ENCODE measurements at regions of chr5 and their contacts with region 1.

Region 1: DNA sequence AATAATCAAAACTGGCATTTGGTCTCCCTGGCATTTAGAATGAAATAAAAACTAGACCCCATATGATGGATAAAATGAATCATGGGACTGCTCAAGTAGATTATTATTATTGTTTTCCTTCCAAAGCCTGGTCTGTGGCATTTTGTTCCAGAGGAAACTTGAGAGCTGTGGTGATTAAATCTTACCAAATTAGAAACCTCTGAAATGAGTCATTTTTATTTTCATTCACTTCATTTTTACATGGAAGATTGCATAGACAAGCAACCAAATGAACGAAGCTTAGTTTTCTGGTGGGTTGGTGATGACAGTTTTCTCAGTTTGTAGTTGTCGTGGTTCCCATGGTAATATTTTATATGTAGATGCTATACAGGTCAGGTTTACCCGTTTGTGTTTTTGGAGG is 23.4 kb downstream of the PAM start:
- DNase-seq: no peak
- H3K4me3 ChIP-seq: no peak overlapping the region
- H3K27ac ChIP-seq: peak overlapping the region; percentile 63 to 69
- H3K4me1 ChIP-seq: peaks cover 11 to 47% of the 10 kb centered on the region in 2 donors
- H3K27me3 ChIP-seq: no peaks in the 10 kb centered on the region
- CTCF ChIP-seq: no peak

Region 2: GRCh38 chr5:102666164-102666946 is 112.1 kb before region 1 on chr5:
- intact Hi-C with region 1: no loop called
- DNase-seq: no peak
- H3K4me3 ChIP-seq: no peak overlapping the region
- H3K27ac ChIP-seq: no peak overlapping the region
- H3K4me1 ChIP-seq: no peaks in the 10 kb centered on the region
- H3K27me3 ChIP-seq: no peaks in the 10 kb centered on the region
- CTCF ChIP-seq: no peak

Region 3: DNA sequence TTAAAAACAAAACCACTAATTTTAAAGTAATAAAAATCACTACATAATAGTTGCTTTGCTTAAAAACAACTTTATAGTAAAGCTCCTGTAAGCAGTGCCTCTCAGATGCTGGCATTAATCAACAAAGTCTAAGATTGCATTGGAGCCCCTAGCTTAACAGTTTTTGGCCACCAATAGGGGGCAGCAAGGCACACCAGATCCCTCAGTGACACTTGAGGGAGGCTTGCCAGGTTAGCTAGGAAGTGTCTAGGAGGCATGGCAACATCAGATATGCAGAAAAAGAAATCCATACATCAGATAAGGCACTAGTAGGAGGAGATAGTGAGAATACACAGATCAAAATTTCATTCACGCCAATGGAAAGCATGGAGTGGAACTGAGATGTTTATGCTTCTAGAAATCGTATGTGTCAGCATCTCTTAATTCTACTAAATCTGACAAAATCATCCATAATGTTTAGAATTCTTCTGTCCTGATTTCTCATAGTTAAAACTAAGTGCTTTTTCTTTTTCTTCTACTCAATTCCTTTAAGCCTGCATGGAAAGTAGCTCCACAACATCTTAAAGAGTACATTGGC is 97.0 kb before region 1 on chr5:
- intact Hi-C with region 1: loop called (anchors 2 kb)
- DNase-seq: peak in 1 of 2 donors; percentile 79
- H3K4me3 ChIP-seq: no peak overlapping the region
- H3K27ac ChIP-seq: no peak overlapping the region
- H3K4me1 ChIP-seq: peaks cover 0 to 2% of the 10 kb centered on the region in 2 donors
- H3K27me3 ChIP-seq: no peaks in the 10 kb centered on the region
- CTCF ChIP-seq: peak; percentile 57 to 75 (median 68)

Region 4: DNA sequence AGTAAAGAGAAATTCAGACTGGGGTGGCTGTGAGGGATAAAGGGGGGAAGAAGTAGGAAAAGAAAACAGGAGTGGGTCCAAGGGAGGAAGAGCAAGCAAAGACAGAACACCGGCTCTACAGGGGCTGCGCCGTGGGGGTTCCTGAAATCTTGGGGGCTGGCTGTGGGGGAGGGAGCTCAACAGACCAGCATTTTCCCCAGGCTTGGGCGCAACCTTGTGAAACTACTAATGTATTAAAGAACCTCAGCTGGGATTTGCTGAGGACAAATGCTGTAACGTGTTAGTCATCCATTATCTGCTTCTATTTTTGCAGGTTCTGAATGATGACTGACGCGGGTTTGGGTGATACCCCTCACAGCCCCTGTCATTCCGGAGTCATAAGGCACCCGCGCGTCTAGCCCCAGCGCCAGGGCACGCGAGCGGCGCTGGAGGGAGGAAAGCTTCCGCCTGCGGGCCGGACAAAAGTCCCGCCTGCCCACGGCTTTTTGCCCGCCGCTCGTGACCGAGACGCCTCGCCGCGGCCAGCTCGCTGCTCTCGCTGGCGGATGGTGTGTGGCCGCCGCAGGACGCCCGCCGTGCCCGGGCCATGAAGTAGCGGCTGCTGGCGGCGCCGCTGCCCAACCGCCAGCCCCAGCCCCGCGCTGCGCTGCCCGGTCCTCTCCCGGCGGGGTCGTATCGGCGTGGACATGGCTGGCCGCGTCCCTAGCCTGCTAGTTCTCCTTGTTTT is 87.2 kb after region 1 on chr5:
- intact Hi-C with region 1: loop called (anchors 5 kb)
- DNase-seq: peak; percentile 34 to 85
- H3K4me3 ChIP-seq: peak overlapping the region; percentile 71 to 73
- H3K27ac ChIP-seq: peak overlapping the region; percentile 92 to 96
- H3K4me1 ChIP-seq: peaks cover 0 to 37% of the 10 kb centered on the region in 2 donors
- H3K27me3 ChIP-seq: no peaks in the 10 kb centered on the region
- CTCF ChIP-seq: no peak

Region 5: GRCh38 chr5:102959055-102959454 is 180.6 kb after region 1 on chr5:
- intact Hi-C with region 1: loop called (anchors 2 kb)
- DNase-seq: no peak
- H3K4me3 ChIP-seq: no peak overlapping the region
- H3K27ac ChIP-seq: peak overlapping the region; percentile 64 to 76
- H3K4me1 ChIP-seq: peaks cover 0 to 29% of the 10 kb centered on the region in 2 donors
- H3K27me3 ChIP-seq: no peaks in the 10 kb centered on the region
- CTCF ChIP-seq: no peak

Region 6: DNA sequence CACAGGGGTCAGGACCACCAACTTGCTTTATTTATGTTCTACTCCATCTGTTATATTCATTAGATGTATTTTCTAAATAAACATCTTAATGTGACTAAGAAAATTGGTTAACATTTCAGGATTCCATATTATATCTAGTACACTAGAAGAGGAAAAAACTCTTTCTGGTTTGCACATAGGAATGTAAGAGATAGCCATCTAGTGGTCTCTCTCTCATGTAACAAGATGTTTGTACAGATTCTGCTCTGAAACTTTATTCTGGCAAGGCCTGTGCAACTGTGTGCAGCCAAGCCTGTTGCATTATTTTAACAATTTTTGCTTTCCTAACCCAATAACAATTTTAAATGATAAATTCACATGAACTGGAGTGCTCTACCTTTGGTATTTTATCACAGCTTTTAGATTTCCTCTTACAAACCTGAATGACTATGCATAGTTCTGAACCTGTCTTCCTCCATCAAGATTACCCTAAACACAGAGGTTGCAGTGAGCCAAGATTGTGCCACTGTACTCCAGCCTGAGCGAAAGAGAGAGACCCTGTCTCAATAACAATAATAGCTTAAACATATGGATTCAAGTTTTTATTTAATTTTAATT is 193.3 kb after region 1 on chr5:
- intact Hi-C with region 1: loop called (anchors 5 kb)
- DNase-seq: no peak
- H3K4me3 ChIP-seq: no peak overlapping the region
- H3K27ac ChIP-seq: peak overlapping the region in 1 of 2 donors; percentile 13
- H3K4me1 ChIP-seq: peaks cover 4 to 8% of the 10 kb centered on the region in 2 donors
- H3K27me3 ChIP-seq: no peaks in the 10 kb centered on the region
- CTCF ChIP-seq: peak in 2 of 3 experiments; percentile 26 to 46

Region 7: DNA sequence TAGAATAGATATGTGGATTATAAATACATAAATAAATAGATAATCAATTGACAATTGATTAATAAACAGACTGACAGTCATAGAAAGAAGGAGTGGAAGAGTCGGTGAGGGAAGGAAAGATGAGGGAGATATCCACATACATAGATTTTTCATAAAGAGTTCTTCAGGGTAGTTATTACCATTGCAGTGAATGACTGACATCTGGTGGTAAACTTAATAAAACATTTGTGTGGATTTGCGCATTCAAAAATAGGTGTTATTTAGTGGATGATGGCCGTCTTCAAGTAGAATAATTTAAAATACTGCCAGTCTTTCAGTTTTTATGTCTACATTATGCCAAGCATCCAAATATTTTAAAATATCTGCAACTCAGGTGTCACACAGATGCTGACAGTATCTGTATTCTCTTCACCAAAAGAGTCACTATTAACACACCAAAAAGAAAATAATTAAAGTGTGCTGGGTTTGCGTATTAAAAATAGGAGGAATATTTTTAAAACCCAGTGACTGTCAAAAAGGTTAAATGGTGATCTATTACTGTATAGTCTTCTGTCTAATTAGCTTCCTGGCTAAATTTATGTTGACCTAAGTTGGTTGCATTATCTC is 262.7 kb after region 1 on chr5:
- intact Hi-C with region 1: loop called (anchors 2 kb)
- DNase-seq: no peak
- H3K4me3 ChIP-seq: peak overlapping the region in 1 of 2 donors; percentile 20
- H3K27ac ChIP-seq: no peak overlapping the region
- H3K4me1 ChIP-seq: no peaks in the 10 kb centered on the region
- H3K27me3 ChIP-seq: no peaks in the 10 kb centered on the region
- CTCF ChIP-seq: peak; percentile 36 to 71 (median 68)